Dendritic cell treated with granulocyte-macrophage colony-stimulating factor and Interleukin-4, amounts not matched to agents 40 ng/mL and 50 ng/mL, for 4 days (primary cell): ENCODE measurements at regions of chr11 and their contacts with region 1.

Region 1: DNA sequence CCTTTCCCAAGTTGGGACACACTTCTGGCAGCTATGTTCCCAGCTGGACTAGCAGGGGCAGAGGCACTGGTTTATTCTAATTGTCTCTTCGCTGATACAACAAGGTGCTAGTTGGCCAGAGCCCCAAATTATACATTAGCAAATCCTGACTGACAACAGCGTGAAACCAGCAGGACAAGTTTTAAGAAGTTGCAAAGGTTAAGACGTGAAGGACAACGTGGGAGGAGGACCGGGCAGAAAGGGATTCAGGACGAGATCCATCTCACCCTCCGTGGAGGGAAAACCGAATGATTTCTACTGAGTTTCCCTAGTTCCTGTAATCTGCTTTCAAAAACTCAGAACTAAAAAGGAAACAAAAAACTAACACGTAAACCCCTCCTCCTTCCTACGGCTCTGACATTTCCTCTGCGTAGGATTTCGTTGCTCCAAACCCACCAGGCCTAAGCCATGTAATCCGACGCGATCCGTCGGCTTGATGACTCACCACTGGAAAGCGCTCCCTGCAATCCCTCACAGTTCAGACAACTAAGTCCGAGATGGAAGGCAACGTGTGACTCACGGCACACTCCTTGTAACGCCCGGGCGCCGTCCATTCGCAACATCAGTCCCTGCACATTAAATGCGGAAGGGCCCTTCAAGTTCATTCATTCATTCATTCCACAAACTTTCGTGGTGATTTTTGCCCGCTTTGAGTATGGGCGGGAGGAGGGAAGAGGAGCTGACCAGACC is 703 bp downstream of the POGLUT3 start:
- H3K4me3 Mint-ChIP-seq: peak overlapping the region; percentile 90
- H3K27ac Mint-ChIP-seq: peak overlapping the region; percentile 96
- H3K4me1 Mint-ChIP-seq: peaks cover 18% of the 10 kb centered on the region
- H3K27me3 Mint-ChIP-seq: no peaks in the 10 kb centered on the region

Region 2: GRCh38 chr11:108467091-108467823 is 30.2 kb before region 1 on chr11 and contains the start of gene C11orf65:
- intact Hi-C with region 1: loop called (anchors 1 kb)
- H3K4me3 Mint-ChIP-seq: peak within 1 kb of the TSS; percentile 99
- H3K27ac Mint-ChIP-seq: peak within 1 kb of the TSS; percentile 100
- H3K4me1 Mint-ChIP-seq: peaks cover 25% of the 10 kb centered on the region
- H3K27me3 Mint-ChIP-seq: peaks cover 2% of the 10 kb centered on the region